ENCODE measurements at regions of chr3 and their contacts with region 1.

Region 1: GRCh38 chr3:49534581-49535441 is 19.5 kb upstream of the BSN start:
- DNase-seq: peak; percentile 32 to 49 (median 37)
- H3K4me3 ChIP-seq: no peak overlapping the region
- H3K27ac ChIP-seq: peak overlapping the region in 1 of 2 donors; percentile 89
- H3K4me1 ChIP-seq: peaks cover 21% of the 10 kb centered on the region
- H3K27me3 ChIP-seq: no peaks in the 10 kb centered on the region
- CTCF ChIP-seq: no peak
- EP300 ChIP-seq: no peak
- POLR2A ChIP-seq: no peak

Region 2: GRCh38 chr3:49469936-49470713 is 64.7 kb before region 1 on chr3 and contains the start of gene DAG1:
- intact Hi-C with region 1: loop called in 1 of 4 experiments (anchors 5 kb)
- DNase-seq: peak; percentile 99
- H3K4me3 ChIP-seq: peak within 1 kb of the TSS; percentile 92
- H3K27ac ChIP-seq: peak within 1 kb of the TSS; percentile 78 to 98
- H3K4me1 ChIP-seq: peaks cover 18% of the 10 kb centered on the region
- H3K27me3 ChIP-seq: no peaks in the 10 kb centered on the region
- CTCF ChIP-seq: peak in 2 of 3 donors; percentile 30 to 41
- EP300 ChIP-seq: no peak
- POLR2A ChIP-seq: peak; percentile 68
- total RNA-seq, gene DAG1: 22.1 to 90.7 (median 61.8) TPM